ENCODE measurements at regions of chr15 and their contacts with region 1.

Region 1: GRCh38 chr15:82108489-82109078 is 62.8 kb upstream of the MEX3B start:
- DNase-seq: peak; percentile 36
- H3K4me3 ChIP-seq: no peak overlapping the region
- H3K27ac ChIP-seq: no peak overlapping the region
- H3K4me1 ChIP-seq: no peaks in the 10 kb centered on the region
- CTCF ChIP-seq: peak; percentile 82

Region 2: GRCh38 chr15:81901319-81901718 is 207.3 kb before region 1 on chr15:
- CTCF ChIA-PET with region 1: no interaction called
- POLR2A ChIA-PET with region 1: no interaction called
- intact Hi-C with region 1: no loop called
- DNase-seq: no peak
- H3K4me3 ChIP-seq: no peak overlapping the region
- H3K27ac ChIP-seq: no peak overlapping the region
- H3K4me1 ChIP-seq: no peaks in the 10 kb centered on the region
- CTCF ChIP-seq: no peak

Region 3: GRCh38 chr15:82046666-82047452 is 61.7 kb before region 1 on chr15:
- CTCF ChIA-PET with region 1: no interaction called
- POLR2A ChIA-PET with region 1: no interaction called
- intact Hi-C with region 1: no loop called
- DNase-seq: peak; percentile 92
- H3K4me3 ChIP-seq: peak overlapping the region; percentile 91
- H3K27ac ChIP-seq: peak overlapping the region; percentile 85
- H3K4me1 ChIP-seq: peaks cover 8% of the 10 kb centered on the region
- CTCF ChIP-seq: peak; percentile 72

Region 4: GRCh38 chr15:82165948-82166376 is 57.4 kb after region 1 on chr15:
- CTCF ChIA-PET with region 1: no interaction called
- POLR2A ChIA-PET with region 1: no interaction called
- intact Hi-C with region 1: no loop called
- DNase-seq: no peak
- H3K4me3 ChIP-seq: no peak overlapping the region
- H3K27ac ChIP-seq: no peak overlapping the region
- H3K4me1 ChIP-seq: no peaks in the 10 kb centered on the region
- CTCF ChIP-seq: no peak

Region 5: DNA sequence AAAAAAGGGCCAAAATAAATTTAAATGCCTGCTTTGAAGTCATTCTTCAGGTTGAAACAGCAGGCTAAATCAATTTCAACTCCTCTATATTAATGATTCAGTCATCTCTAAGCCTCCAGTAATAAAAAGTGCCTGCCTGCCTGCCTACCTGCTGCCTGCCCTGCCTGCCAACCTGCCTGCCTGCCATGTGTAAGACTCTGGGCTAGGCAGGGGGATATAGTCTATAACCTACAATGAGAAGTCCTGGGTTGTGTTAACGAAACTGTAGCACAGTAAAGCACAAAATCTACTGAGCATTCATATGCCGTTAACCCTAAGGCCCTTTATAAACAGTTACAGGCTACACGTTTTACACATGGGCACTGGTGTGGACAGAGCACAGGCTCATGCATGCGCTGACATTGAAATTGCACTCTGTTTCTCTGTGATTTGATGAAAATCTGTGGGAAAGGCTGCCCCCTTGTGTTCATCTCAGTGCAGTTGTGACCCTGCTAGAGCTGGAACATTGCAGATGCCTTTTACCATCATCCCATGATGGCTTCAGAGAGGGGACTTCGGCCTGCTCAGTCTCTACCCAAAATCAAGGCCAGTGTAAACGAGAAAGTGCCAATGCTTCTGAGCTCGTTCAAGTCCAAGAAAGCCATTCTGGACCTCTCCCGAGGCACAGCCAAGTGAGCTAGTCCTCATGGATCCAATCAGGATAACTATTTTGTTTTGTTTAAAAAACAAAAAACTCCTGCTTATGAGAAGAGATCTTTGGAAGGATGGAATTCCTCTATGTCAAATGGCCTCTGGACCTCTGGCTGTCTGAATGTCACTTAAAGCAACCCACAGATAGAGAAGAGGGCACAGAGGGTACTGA is 89.4 kb after region 1 on chr15:
- CTCF ChIA-PET with region 1: no interaction called
- POLR2A ChIA-PET with region 1: no interaction called
- intact Hi-C with region 1: loop called (anchors 2 kb)
- DNase-seq: peak; percentile 71
- H3K4me3 ChIP-seq: no peak overlapping the region
- H3K27ac ChIP-seq: no peak overlapping the region
- H3K4me1 ChIP-seq: no peaks in the 10 kb centered on the region
- CTCF ChIP-seq: peak; percentile 82